ENCODE measurements at regions of chr13 and their contacts with region 1.

Region 1: GRCh38 chr13:21476893-21477472 is 17.9 kb upstream of the ZDHHC20 start:
- DNase-seq: peak; percentile 73 to 96
- H3K4me3 ChIP-seq: no peak overlapping the region
- CTCF ChIP-seq: peak in 2 of 3 donors; percentile 60 to 90
- POLR2A ChIP-seq: no peak

Region 2: DNA sequence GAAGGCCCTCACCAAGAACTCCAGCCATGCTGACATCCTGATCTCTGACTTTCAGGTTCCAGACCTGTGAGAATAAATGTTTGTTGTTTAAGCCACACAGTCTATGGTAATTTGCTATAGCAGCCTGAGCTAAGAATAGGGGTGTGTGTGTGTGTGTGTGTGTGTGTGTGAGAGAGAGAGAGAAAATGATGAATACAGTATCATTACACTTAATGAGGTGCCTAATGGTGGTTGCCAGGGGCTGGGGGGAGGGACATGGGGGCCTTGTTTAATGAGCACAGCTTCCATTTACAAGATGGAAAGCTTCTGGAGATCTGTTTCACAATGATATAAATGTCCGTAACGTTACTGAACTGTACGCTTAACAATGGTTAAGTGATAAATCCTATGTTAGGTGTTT is 361.8 kb before region 1 on chr13:
- intact Hi-C with region 1: loop called (anchors 10 kb)
- DNase-seq: no peak
- H3K4me3 ChIP-seq: no peak overlapping the region
- CTCF ChIP-seq: no peak
- POLR2A ChIP-seq: no peak

Region 3: DNA sequence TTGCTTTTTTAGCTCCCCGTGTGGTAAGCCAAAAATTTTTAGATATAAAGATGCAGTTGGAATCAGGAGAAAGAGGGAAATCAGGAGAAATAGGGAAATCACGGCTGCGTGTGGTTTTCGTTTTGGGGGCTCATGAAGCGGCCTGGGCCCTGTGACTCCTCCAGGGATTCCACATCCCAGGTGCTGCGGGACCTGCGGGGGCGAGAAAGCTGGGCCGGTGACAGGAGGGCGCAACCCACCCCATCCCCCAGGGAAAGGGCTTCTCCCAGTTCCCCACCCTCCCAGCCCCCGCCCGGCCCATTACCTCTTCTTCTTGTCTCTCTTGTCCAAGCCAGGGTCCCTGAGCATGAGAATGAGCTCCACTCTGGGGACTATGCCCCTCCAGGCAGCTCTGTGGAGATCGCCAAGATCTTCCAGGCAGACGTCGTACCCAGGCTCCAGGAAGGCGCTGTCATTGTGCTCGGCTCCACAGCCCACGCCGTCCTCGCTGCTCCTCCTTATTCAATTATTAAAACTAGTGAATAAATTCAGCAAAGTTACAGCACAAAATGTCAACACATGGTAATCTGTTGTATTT is 189.6 kb before region 1 on chr13:
- intact Hi-C with region 1: loop called (anchors 5 kb)
- DNase-seq: no peak
- H3K4me3 ChIP-seq: no peak overlapping the region
- CTCF ChIP-seq: no peak
- POLR2A ChIP-seq: no peak

Region 4: GRCh38 chr13:21297914-21298831 is 178.8 kb before region 1 on chr13:
- intact Hi-C with region 1: loop called (anchors 5 kb)
- DNase-seq: peak; percentile 74 to 95
- H3K4me3 ChIP-seq: peak overlapping the region; percentile 99
- CTCF ChIP-seq: peak in 1 of 3 donors; percentile 81
- POLR2A ChIP-seq: no peak

Region 5: GRCh38 chr13:21837841-21838551 is 361.0 kb after region 1 on chr13:
- intact Hi-C with region 1: no loop called
- DNase-seq: peak in 1 of 2 donors; percentile 32
- H3K4me3 ChIP-seq: no peak overlapping the region
- CTCF ChIP-seq: no peak
- POLR2A ChIP-seq: no peak

Region 6: DNA sequence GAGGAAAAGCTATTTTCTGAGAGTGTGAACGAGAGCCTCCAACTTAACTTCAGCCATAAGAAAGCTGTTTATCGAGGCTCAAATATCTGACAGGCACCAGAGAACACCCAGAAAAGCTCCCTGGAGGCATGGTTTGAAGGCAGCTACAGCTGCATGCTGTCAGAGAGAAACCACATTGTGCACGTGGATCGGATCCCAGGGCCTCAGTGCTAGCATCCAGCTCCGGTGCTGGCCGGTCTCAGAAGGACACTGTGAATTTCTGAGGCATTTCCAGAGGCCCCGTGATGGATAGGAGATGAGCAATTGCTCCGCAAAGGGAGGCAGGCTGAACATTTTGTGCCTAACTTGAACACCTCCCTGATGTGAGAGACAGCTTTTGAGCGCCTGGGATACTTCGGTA is 509.6 kb after region 1 on chr13:
- intact Hi-C with region 1: no loop called
- DNase-seq: peak in 1 of 2 donors; percentile 74
- H3K4me3 ChIP-seq: no peak overlapping the region
- CTCF ChIP-seq: no peak
- POLR2A ChIP-seq: no peak